WTC11 (cell line): ENCODE measurements at regions of chr14 and their contacts with region 1.

Region 1: GRCh38 chr14:69346710-69347109 is 51.4 kb downstream of the ERH start:
- DNase-seq: peak; percentile 91
- ATAC-seq: peak; percentile 94
- H3K4me3 Mint-ChIP-seq: no peak overlapping the region
- H3K27ac Mint-ChIP-seq: no peak overlapping the region
- H3K4me1 Mint-ChIP-seq: peaks cover 21% of the 10 kb centered on the region
- H3K27me3 Mint-ChIP-seq: no peaks in the 10 kb centered on the region; the same call in 1 of the 2 replicates
- CTCF ChIP-seq: peak; percentile 61

Region 2: GRCh38 chr14:69153131-69153872 is 193.4 kb before region 1 on chr14:
- CTCF ChIA-PET with region 1: interaction called, 11 read pairs
- POLR2A ChIA-PET with region 1: no interaction called
- DNase-seq: peak; percentile 90
- ATAC-seq: peak; percentile 73
- H3K4me3 Mint-ChIP-seq: peak overlapping the region; percentile 92
- H3K27ac Mint-ChIP-seq: peak overlapping the region; percentile 48; the same call in 1 of the 2 replicates
- H3K4me1 Mint-ChIP-seq: peaks cover 28% of the 10 kb centered on the region
- H3K27me3 Mint-ChIP-seq: peaks cover 14% of the 10 kb centered on the region
- CTCF ChIP-seq: no peak

Region 3: GRCh38 chr14:69260861-69261564 is 85.7 kb before region 1 on chr14:
- CTCF ChIA-PET with region 1: interaction called, 56 read pairs
- POLR2A ChIA-PET with region 1: no interaction called
- DNase-seq: peak; percentile 73
- ATAC-seq: peak; percentile 43
- H3K4me3 Mint-ChIP-seq: peak overlapping the region; percentile 79
- H3K27ac Mint-ChIP-seq: no peak overlapping the region
- H3K4me1 Mint-ChIP-seq: peaks cover 21% of the 10 kb centered on the region
- H3K27me3 Mint-ChIP-seq: peaks cover 57% of the 10 kb centered on the region
- CTCF ChIP-seq: peak; percentile 82

Region 4: DNA sequence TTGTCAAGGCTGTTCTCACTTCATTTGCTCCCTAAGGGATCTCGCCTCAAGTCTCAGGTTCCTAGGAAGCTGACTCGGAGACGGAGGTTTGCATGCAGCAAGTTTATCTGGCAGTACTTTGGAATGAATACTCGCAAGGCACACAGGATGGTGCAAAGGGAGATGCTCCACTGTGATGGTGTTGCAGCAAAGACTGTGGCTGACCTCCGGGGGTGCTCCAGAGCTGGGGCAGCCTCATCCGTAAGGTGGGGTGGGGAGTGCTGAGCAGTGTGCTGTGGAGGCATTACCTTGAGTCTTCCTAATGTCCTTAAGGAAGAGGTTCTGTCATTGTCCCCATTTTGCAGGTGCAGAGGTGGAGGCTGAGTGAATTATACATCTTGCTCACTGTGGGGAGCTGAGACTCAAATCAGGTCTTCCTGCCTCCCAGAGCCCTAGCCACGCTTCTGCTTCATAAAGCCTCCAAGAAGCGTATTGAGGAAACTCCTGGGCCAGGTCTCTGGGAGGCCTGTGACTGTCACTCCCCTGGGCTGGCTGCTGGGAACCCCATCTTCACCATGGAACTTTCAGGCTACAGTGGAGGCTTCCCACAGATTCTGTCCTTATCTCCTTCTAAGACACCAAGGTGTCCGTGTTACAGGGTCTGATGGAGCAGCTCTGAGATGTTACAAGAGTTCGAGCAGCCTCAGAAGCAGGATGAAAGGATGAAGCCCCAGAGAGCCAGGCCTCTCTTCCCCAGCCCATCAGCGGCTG is 47.2 kb before region 1 on chr14:
- CTCF ChIA-PET with region 1: interaction called, 23 read pairs
- POLR2A ChIA-PET with region 1: no interaction called
- DNase-seq: peak; percentile 65
- ATAC-seq: peak; percentile 99
- H3K4me3 Mint-ChIP-seq: no peak overlapping the region
- H3K27ac Mint-ChIP-seq: no peak overlapping the region
- H3K4me1 Mint-ChIP-seq: 0 out of 2 replicates have a peak, but pooled peaks cover 3% of the 10 kb centered on the region
- H3K27me3 Mint-ChIP-seq: no peaks in the 10 kb centered on the region; the same call in 1 of the 2 replicates
- CTCF ChIP-seq: no peak

Region 5: GRCh38 chr14:69325646-69326265 is 21.0 kb before region 1 on chr14:
- CTCF ChIA-PET with region 1: interaction called, 56 read pairs
- POLR2A ChIA-PET with region 1: no interaction called
- DNase-seq: peak; percentile 28
- ATAC-seq: peak; percentile 77
- H3K4me3 Mint-ChIP-seq: no peak overlapping the region
- H3K27ac Mint-ChIP-seq: no peak overlapping the region
- H3K4me1 Mint-ChIP-seq: peaks cover 8% of the 10 kb centered on the region
- H3K27me3 Mint-ChIP-seq: no peaks in the 10 kb centered on the region
- CTCF ChIP-seq: no peak

Region 6: DNA sequence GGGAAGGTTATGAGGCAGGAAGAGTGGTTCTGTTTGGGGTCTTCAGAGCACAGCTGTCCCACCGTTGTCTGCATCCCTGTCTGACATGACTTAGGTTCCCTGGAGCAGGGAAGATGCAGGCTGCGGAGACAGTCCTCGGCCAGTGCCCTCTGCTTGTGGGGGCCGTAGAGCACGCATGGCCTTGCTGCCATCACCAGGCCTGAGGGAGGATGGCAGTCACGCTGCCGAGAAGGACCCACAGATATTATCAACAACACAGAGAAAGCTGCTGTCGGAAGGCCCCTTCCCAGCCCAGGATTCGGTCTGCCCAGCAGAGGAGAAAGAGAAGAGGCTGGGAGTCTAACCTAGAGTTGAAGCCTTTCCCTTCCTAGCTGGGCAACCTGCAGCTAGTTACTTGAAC is 16.3 kb after region 1 on chr14:
- CTCF ChIA-PET with region 1: interaction called, 60 read pairs
- POLR2A ChIA-PET with region 1: no interaction called
- DNase-seq: peak; percentile 63
- ATAC-seq: peak; percentile 99
- H3K4me3 Mint-ChIP-seq: no peak overlapping the region
- H3K27ac Mint-ChIP-seq: no peak overlapping the region; the same call in 1 of the 2 replicates
- H3K4me1 Mint-ChIP-seq: no peaks in the 10 kb centered on the region
- H3K27me3 Mint-ChIP-seq: no peaks in the 10 kb centered on the region
- CTCF ChIP-seq: no peak

Region 7: DNA sequence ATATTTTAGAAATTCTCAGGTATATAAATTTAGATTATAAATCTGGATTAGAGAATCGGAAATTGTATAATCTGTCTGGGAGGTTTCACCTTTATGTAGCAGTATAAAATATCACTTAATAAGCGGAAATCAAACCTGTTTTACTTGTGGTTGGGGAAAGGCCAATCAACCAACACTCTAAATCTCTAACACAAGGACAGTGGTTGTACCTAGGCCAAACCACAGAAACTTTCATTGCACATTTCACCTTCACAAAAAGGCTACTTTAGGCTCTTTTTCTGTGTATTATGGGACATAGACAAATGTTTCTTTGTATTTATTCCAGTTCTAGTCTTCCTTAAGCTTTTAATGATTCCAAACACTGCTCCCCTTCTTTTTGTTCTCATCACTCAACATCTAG is 31.6 kb after region 1 on chr14:
- CTCF ChIA-PET with region 1: no interaction called
- POLR2A ChIA-PET with region 1: no interaction called
- DNase-seq: no peak
- ATAC-seq: no peak
- H3K4me3 Mint-ChIP-seq: no peak overlapping the region
- H3K27ac Mint-ChIP-seq: no peak overlapping the region
- H3K4me1 Mint-ChIP-seq: no peaks in the 10 kb centered on the region
- H3K27me3 Mint-ChIP-seq: no peaks in the 10 kb centered on the region
- CTCF ChIP-seq: no peak

Region 8: DNA sequence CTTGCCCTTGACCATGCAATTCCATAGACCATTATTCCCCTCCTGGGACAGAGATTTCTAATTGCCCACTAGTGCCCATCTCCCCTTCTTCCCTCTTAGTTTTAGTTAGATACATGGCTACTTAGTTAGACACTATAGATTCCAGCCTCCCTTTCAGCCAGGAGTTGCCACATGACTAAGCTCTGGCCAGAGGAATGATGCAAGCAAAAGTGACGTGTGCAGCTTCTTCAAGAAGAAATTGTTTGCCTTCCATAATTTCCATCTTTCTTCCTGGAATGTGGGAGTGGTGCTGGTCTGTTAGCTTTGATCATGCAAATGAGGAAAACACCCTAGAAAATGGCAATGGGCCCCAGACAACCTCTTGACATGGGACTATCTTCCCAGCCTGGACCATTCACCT is 206.5 kb after region 1 on chr14:
- CTCF ChIA-PET with region 1: no interaction called
- POLR2A ChIA-PET with region 1: no interaction called
- DNase-seq: no peak
- ATAC-seq: no peak
- H3K4me3 Mint-ChIP-seq: no peak overlapping the region
- H3K27ac Mint-ChIP-seq: no peak overlapping the region
- H3K4me1 Mint-ChIP-seq: peaks cover 20% of the 10 kb centered on the region
- H3K27me3 Mint-ChIP-seq: no peaks in the 10 kb centered on the region
- CTCF ChIP-seq: no peak

Region 9: DNA sequence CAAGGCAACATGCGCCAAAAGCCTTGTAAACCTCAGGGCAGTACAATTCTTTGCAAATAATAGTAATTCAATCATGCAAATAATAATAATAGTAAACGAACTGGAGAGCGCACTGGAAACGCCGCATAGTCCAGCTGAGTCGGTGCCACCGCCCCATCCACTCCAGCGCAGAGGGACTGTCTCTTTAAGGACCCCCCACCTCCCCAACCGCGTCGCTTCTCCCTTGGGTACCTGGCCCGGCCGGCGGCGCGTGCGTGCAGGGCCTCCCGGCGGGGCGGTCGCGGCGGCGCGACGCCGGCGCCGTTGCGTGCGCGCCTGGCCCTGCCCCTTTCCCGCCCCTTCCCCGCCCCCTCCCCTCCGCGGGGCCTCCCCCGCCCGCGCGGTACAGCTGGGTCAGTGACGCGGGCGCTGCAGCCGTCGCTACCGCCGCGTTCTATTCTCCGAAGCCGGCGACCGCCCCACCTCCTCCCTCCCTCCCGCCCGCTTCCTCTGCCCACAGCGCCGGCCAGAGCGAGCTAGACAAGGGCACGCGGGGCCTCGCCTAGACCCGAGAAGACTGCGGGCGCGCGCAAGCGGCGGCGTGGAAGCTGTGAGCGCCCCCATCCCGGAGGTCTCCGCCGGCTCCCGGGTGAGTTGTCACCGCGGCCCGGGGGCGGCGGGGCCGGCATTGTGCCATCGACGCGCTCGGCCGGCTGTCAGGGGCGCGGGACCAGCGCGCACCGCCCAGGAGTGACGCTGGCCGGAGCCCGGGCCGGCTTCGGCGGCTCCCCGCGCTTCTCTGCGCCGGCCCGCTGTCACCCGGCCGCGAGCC is 264.7 kb after region 1 on chr14 and contains the start of gene SUSD6:
- CTCF ChIA-PET with region 1: no interaction called
- POLR2A ChIA-PET with region 1: no interaction called
- DNase-seq: peak; percentile 81
- ATAC-seq: peak; percentile 78
- H3K4me3 Mint-ChIP-seq: peak within 1 kb of the TSS; percentile 84
- H3K27ac Mint-ChIP-seq: peak within 1 kb of the TSS; percentile 60; the same call in 1 of the 2 replicates
- H3K4me1 Mint-ChIP-seq: peaks cover 44% of the 10 kb centered on the region
- H3K27me3 Mint-ChIP-seq: peaks cover 10% of the 10 kb centered on the region
- CTCF ChIP-seq: no peak
- total RNA-seq, gene SUSD6: 6.6 to 10.1 TPM (median 8.1 TPM) in 3 replicates